Heart left ventricle (tissue), 16 donors: ENCODE measurements at regions of chr1 and their contacts with region 1.

Region 1: DNA sequence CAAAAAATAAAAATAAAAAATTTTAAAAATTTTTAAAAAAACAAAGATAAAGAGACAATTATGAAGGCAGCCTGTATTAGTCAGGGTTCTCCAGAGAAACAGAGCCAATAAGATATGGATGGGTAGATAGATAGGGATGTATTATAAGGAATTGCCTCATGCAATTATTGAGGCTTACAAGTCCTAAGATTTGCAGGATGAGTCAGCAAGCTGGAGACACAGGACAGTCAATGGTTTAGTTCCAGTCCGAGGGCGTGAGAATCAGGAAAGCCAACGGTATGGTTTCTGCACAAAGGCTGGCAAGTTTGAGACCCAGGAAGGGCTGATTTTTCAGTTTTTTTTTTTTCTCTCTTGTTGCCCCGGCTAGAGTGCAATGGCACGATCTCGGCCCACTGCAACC is 24.1 kb upstream of the EIF4G3 start:
- DNase-seq: no peak
- ATAC-seq: no peak
- H3K4me3 ChIP-seq: no peak overlapping the region
- H3K27ac ChIP-seq: no peak overlapping the region
- H3K4me1 ChIP-seq: no peaks in the 10 kb centered on the region
- H3K27me3 ChIP-seq: no peaks in the 10 kb centered on the region
- CTCF ChIP-seq: no peak
- POLR2A ChIP-seq: no peak

Region 2: GRCh38 chr1:20786253-20787028 is 414.3 kb before region 1 on chr1:
- intact Hi-C with region 1: loop called in 2 of 10 experiments (anchors 2 to 10 kb)
- DNase-seq: peak; percentile 95 to 99 (median 96)
- ATAC-seq: peak; percentile 87 to 97 (median 94)
- H3K4me3 ChIP-seq: peak overlapping the region; percentile 77 to 99 (median 95)
- H3K27ac ChIP-seq: peak overlapping the region; percentile 84 to 100 (median 98)
- H3K4me1 ChIP-seq: peaks cover 4 to 50% (median 30%) of the 10 kb centered on the region in 12 donors
- H3K27me3 ChIP-seq: no peaks in the 10 kb centered on the region
- CTCF ChIP-seq: peak in 1 of 12 donors; percentile 12
- POLR2A ChIP-seq: peak in 1 of 2 donors; percentile 79

Region 3: DNA sequence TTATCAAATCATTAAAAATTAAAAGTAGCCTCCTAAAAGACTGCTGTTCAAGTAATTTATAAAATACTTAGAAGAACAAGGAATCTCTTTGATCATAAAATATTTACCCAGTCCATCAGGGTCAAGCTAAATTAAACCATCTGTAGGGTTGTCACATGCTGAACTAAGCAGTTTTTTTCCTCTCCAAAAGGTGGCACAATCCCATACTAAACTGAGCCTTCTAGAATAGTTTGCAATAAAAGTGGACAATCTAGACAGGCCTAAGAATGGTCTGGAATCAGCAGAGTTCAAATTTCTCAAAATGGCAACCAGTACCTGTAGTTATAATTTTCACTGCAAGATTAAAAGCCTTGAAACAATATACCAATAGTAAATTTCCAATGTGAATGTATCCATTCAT is 218.9 kb before region 1 on chr1:
- intact Hi-C with region 1: loop called in 8 of 10 experiments (anchors 2 to 10 kb)
- DNase-seq: no peak
- ATAC-seq: peak in 2 of 4 donors; percentile 45 to 77
- H3K4me3 ChIP-seq: no peak overlapping the region
- H3K27ac ChIP-seq: no peak overlapping the region
- H3K4me1 ChIP-seq: peaks cover 0 to 7% (median 0%) of the 10 kb centered on the region in 12 donors
- H3K27me3 ChIP-seq: no peaks in the 10 kb centered on the region
- CTCF ChIP-seq: peak in 10 of 12 donors; percentile 15 to 59 (median 41)
- POLR2A ChIP-seq: no peak

Region 4: DNA sequence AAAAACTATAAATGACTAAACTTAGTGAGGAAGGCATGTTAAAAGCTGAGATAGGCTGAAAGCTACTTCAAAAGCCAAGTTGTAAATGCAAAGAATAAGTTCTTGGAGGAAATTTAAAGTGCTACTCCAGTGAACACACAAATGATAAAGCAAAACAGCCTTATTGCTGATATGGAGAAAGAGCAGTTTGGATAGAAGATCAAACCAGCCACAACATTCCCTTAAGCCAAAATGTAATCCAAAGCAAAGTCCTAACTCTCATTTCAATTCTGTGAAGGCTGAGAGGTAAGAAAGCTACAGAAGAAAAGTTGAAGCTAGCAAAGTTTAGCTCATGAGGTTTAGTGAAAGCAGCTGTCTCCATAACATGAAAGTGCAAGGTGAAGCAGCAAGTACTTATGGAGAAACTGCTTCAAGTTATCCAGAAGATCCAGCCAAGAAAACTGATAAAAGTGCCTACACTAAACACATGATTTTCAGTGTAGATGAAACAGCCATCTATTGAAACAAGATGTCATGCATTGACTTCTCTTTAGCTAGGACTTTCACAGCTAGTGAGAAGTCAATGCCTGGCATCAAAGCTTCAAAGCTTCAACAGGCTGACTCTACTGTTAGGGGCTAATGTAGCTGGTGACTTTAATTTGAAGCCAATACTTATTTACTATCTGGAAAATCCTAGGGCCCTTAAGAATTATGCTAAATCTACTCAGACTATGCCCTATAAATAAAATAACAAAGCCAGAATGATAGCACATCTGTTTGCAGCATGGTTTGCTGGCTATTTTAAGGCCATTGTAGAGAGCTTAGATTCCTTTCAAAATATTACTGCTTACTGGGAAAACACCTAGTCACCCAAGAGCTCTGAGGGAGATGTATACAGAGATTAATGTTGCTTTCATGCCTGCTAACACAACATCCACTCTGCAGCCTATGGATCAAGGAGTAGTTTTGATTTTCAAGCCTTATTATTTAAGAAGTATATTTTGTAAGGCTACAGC is 212.6 kb before region 1 on chr1:
- intact Hi-C with region 1: loop called in 8 of 10 experiments (anchors 2 to 10 kb)
- DNase-seq: no peak
- ATAC-seq: no peak
- H3K4me3 ChIP-seq: no peak overlapping the region
- H3K27ac ChIP-seq: no peak overlapping the region
- H3K4me1 ChIP-seq: peaks cover 0 to 11% (median 5%) of the 10 kb centered on the region in 12 donors
- H3K27me3 ChIP-seq: no peaks in the 10 kb centered on the region
- CTCF ChIP-seq: no peak
- POLR2A ChIP-seq: no peak

Region 5: DNA sequence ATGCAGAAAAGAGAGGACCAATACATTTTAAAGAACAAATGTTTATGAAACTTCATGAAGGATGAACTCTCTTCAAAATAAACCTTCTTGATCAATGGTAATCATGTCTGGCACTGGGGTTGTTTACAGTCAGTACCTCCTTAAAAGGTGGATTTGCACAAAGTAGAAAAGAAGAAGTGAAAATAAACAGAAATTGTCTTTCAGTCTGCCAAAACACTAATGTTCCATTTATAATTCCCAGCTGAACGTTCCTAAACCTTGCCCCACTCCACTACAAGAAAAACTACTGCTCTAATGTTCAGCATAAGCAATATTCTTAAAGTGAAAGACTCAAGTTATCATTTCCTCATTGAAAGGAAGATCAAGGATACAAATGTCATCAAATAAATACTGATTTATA is 110.3 kb before region 1 on chr1:
- intact Hi-C with region 1: no loop called
- DNase-seq: no peak
- ATAC-seq: no peak
- H3K4me3 ChIP-seq: no peak overlapping the region
- H3K27ac ChIP-seq: peak overlapping the region in 1 of 12 donors; percentile 80
- H3K4me1 ChIP-seq: peaks cover 0 to 29% (median 7%) of the 10 kb centered on the region in 12 donors
- H3K27me3 ChIP-seq: no peaks in the 10 kb centered on the region
- CTCF ChIP-seq: no peak
- POLR2A ChIP-seq: no peak